ENCODE measurements at regions of chr16 and their contacts with region 1.

Region 1: GRCh38 chr16:11356573-11357331 is 11.5 kb downstream of the RMI2 start:
- DNase-seq: no peak
- H3K4me3 ChIP-seq: no peak overlapping the region
- H3K27me3 ChIP-seq: no peaks in the 10 kb centered on the region
- CTCF ChIP-seq: peak; percentile 76

Region 2: DNA sequence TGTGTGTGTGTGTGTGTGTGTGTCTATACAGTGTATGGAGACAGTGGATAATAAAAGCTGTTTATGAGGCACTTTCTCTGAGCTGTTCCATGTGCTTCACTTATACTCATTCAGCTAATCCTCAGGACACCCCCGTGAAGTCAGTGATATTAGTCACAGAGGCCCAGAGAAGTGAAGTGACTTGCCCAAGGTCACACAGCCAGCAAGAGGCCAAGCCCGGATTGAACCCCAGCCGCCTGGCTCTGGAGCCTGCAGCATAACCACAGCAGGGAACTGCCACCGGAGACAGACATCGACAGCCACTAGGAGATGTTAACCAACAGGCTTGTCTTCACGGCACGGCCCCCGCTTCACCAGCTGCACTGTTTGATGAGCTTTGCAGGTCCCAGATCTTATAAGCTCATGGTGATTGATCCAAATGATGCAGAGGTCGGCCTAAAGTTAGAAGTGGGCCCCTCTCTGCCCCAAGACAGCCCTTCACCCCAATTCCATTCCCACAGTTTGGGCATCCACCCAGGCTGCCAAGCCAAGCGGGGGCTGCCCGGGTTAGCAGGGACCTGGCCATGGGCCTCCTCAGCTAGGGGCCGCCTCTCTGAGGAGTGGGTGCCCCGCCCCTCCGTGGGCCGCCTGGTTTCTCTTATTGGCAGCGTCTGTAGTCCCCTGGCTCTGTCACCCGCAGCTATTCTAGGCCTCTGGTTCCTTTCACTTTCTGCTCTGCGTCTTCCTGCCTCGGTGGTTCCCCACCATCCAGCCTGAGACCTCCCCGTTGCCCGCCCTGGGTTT is 131.7 kb before region 1 on chr16:
- CTCF ChIA-PET with region 1: no interaction called
- POLR2A ChIA-PET with region 1: no interaction called
- DNase-seq: no peak
- H3K4me3 ChIP-seq: no peak overlapping the region
- H3K27me3 ChIP-seq: peaks cover under 1% of the 10 kb centered on the region
- CTCF ChIP-seq: no peak

Region 3: DNA sequence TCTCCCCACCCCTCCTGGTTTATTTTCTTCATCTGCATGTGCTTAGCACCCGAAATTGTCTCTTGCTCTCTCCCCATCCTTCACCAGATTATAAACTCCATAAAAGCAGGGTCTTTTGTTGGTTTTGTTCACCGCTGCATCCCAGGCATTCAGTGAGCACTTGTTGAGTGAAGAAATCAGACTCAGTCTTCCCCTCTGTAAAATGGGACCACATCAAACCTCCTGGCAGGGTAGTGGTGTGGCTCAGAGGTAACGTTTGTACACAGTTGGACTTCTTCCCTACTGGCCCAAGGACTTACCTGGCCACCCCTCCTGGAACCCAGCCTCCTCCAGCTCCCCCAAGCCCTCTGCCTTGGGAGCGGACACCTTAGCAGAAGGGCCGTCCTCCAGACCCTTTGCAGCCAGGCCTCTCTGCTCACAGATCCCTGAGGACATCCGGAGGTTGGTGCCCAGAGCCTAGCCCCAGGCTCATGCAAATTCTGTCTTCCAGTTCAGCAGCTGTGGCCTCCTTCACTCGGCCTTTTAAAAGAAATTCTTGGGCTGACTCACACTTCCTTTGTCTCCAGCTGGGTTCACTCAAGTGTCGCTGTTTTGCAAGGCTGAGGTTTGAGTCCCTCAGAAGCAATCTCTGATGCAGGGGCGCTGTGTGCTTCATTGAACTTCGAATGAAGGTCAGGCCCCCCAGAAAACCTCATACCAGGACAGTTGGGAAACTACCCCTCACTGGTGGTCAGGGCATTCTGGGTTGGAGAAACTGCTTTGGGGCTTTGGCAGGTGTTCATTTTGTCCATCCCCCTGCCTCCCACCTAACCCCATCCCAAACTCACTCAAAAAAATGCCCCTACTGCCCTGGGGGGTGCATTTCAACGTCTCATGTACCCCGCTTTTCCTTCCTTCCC is 28.3 kb before region 1 on chr16:
- CTCF ChIA-PET with region 1: interaction called, 10 read pairs
- POLR2A ChIA-PET with region 1: no interaction called
- DNase-seq: peak; percentile 79
- H3K4me3 ChIP-seq: peak overlapping the region; percentile 18; the same call in 1 of the 2 replicates
- H3K27me3 ChIP-seq: no peaks in the 10 kb centered on the region
- CTCF ChIP-seq: 0 out of 2 replicates have a peak, but pooled peaks have one; percentile 18